ENCODE measurements at regions of chr11 and their contacts with region 1.

Region 1: DNA sequence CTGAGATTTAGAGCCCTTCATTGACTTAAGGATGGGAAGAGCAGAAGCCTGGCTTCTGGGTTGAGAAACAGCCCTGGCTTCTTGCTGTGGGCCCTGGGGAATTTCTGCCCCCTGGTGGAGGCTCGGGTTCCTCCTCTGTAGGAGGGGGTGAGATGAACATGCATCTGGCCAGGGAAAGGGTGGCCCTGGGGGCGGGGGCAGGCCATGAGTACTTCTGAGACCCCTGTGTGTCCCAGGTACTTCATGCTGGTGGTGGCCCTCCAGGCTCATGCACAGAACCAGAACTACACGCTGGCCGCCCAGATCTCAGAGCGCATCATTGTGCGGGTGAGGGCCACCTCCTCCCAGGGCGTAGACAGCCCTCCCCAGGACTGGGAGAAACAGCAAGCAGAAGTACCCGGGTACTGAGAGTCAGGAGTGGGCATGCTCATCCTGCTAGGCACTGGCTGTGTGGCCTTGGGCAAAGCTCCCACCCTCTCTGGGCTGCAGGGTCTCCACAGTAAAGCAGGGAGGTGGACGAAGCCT is 15.8 kb downstream of the TMEM258 start:
- DNase-seq: peak; percentile 55
- H3K4me3 Mint-ChIP-seq: peak overlapping the region; percentile 45
- H3K27ac Mint-ChIP-seq: peak overlapping the region; percentile 17
- H3K4me1 Mint-ChIP-seq: peaks cover 13% of the 10 kb centered on the region
- H3K27me3 Mint-ChIP-seq: no peaks in the 10 kb centered on the region

Region 2: DNA sequence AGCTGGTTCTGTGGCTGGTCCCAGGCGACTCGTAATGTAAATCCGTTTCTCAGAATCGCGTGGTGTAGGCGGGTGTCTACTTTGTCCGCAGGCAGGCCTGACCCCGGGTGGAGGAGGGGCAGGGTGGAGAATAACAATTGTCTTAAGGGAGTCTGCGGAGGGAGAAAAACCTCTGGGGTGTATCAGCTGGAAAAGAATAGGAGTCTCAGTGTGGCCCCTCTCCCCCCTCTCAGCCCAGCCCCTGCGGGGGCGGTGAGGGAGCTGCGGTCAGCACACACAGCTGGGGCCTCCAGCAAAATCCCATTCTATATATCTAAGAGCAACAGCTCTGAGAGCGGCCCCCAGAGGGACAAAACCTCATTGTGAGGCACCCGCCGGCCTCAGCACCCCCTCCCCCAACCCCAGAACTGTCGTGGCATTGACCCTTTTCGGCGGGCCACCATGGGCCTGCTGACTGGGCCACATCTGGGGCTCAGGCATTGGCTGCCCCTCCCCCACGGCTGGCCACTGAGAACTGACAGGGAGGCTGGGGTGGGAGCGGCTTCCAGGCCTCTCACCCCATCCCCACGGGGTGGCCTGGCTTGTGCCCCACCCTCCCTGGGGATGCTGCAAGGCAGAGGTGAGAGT is 26.9 kb before region 1 on chr11:
- intact Hi-C with region 1: loop called (anchors 2 kb)
- DNase-seq: no peak
- H3K4me3 Mint-ChIP-seq: no peak overlapping the region
- H3K27ac Mint-ChIP-seq: no peak overlapping the region
- H3K4me1 Mint-ChIP-seq: peaks cover 8% of the 10 kb centered on the region
- H3K27me3 Mint-ChIP-seq: peaks cover 27% of the 10 kb centered on the region